GM12878 (cell line): ENCODE measurements at regions of chr12 and their contacts with region 1.

Region 1: GRCh38 chr12:26884765-26885576 is 52.0 kb upstream of the ITPR2 start:
- DNase-seq: peak; percentile 65
- ATAC-seq: peak; percentile 98
- H3K4me3 ChIP-seq: no peak overlapping the region
- H3K27ac ChIP-seq: no peak overlapping the region
- H3K4me1 ChIP-seq: peaks cover 4% of the 10 kb centered on the region; the same call in 1 of the 2 replicates
- H3K27me3 ChIP-seq: no peaks in the 10 kb centered on the region
- CTCF ChIP-seq: peak; percentile 95 to 98 (median 98)
- EP300 ChIP-seq: no peak
- POLR2A ChIP-seq: no peak
- RAD21 ChIP-seq: peak; percentile 96

Region 2: DNA sequence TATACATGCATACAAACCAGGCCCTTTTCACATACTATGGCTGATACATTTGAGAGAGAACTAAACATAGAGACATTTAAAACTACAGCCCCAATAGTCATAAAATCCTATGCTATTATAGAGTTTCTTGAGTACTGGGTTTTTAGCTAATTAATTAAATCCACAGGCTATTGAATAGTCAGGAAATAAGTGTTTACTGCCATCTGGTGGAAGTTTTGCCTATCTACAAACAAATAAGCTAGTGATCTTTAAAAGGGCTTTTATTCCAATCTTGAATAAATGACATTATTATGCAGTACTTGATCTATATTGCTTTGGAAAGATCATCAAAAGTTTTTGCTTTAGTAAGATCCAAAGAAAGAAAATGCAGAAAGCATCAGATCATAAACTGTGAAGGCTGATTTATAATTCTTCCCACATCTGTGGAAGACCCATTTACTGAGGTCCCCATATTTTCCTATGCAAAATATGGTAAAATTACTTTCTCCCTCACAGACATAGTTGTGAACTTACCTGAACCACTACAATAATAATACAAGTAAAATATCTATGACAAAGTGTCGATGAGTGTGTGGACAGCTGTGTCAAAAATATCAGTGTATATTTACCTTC is 183.3 kb before region 1 on chr12:
- CTCF ChIA-PET with region 1: interaction called, 14 read pairs
- POLR2A ChIA-PET with region 1: no interaction called
- RAD21 ChIA-PET with region 1: interaction called, 3 read pairs
- SMC1A ChIA-PET with region 1: interaction called, 7 read pairs
- in situ Hi-C with region 1: no loop called
- intact Hi-C with region 1: no loop called
- DNase-seq: no peak
- ATAC-seq: peak; percentile 78
- H3K4me3 ChIP-seq: no peak overlapping the region
- H3K27ac ChIP-seq: no peak overlapping the region
- H3K4me1 ChIP-seq: no peaks in the 10 kb centered on the region
- H3K27me3 ChIP-seq: no peaks in the 10 kb centered on the region
- CTCF ChIP-seq: peak; percentile 14 to 53 (median 28); a peak in 3 of 6 replicates
- EP300 ChIP-seq: no peak
- POLR2A ChIP-seq: no peak
- RAD21 ChIP-seq: peak; percentile 56

Region 3: DNA sequence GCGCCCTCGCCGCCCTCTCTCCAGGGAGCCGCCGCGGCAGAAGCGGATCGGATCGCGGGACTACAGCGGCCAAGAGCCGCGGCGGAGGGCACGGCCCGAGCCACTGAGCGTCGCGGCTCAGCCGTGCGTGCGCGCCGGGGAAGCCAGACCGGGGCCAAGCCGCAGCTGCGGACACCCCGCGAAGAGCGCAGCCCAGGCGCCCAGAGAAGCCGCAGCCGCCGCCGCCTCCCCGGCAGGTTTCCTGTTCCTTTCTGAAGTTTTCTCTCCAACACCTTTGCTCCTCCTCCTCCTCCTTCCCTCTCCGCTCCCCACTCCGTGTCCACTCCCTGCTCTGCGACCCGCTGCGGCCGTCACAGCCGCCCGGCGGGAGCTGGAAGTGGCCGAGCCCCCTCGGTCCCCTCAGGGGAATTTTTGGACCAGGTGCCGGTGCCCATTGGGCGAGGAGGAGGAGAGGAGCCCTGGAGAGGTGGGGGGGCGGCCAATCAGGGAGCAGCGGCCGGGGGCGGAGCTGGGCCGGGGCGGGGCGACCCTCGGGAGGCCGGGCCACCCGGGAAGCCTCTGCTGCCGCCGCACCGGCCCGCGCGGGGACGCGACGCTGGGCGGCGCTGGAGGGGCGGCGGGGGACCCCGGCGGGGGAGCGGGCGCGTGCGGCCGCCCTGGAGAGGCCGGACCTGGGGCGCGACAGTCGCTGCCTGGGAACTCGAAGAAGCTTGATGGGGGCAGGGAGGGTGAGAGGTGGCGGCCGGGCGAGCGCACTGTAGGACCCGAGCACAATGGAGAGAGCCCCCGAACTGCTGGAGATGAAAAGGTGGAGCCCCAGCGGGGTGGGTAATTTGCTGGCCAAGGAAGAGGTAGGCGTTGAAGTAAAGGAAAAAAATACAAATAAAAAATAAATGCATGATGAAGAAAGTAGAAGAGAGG is 51.9 kb before region 1 on chr12 and contains the start of gene ITPR2:
- CTCF ChIA-PET with region 1: interaction called, 35 read pairs
- POLR2A ChIA-PET with region 1: interaction called, 3 read pairs
- RAD21 ChIA-PET with region 1: interaction called, 27 read pairs
- SMC1A ChIA-PET with region 1: interaction called, 40 read pairs
- in situ Hi-C with region 1: no loop called
- intact Hi-C with region 1: loop called (anchors 10 kb)
- DNase-seq: peak; percentile 60
- ATAC-seq: peak; percentile 84
- H3K4me3 ChIP-seq: peak within 1 kb of the TSS; percentile 87
- H3K27ac ChIP-seq: peak within 1 kb of the TSS; percentile 80
- H3K4me1 ChIP-seq: peaks cover 5% of the 10 kb centered on the region
- H3K27me3 ChIP-seq: no peaks in the 10 kb centered on the region
- CTCF ChIP-seq: peak; percentile 20 to 51 (median 21); a peak in 3 of 6 replicates
- EP300 ChIP-seq: no peak
- POLR2A ChIP-seq: peak; percentile 87
- RAD21 ChIP-seq: peak; percentile 61
- polyA plus RNA-seq, gene ITPR2: 7.5 to 10.9 TPM

Region 4: GRCh38 chr12:26853303-26854030 is 31.5 kb before region 1 on chr12:
- CTCF ChIA-PET with region 1: interaction called, 158 read pairs
- POLR2A ChIA-PET with region 1: interaction called, 6 read pairs
- RAD21 ChIA-PET with region 1: interaction called, 60 read pairs
- SMC1A ChIA-PET with region 1: interaction called, 98 read pairs
- in situ Hi-C with region 1: no loop called
- intact Hi-C with region 1: loop called (anchors 1 kb)
- DNase-seq: no peak
- ATAC-seq: peak; percentile 97
- H3K4me3 ChIP-seq: no peak overlapping the region
- H3K27ac ChIP-seq: no peak overlapping the region
- H3K4me1 ChIP-seq: peaks cover 3% of the 10 kb centered on the region; the same call in 1 of the 2 replicates
- H3K27me3 ChIP-seq: no peaks in the 10 kb centered on the region
- CTCF ChIP-seq: peak; percentile 81 to 94 (median 88); a peak in 5 of 6 replicates
- EP300 ChIP-seq: no peak; a peak in 1 of 4 replicates
- POLR2A ChIP-seq: no peak
- RAD21 ChIP-seq: peak; percentile 93

Region 5: GRCh38 chr12:26870491-26871419 is 14.2 kb before region 1 on chr12:
- CTCF ChIA-PET with region 1: interaction called, 95 read pairs
- POLR2A ChIA-PET with region 1: interaction called, 3 read pairs
- RAD21 ChIA-PET with region 1: interaction called, 36 read pairs
- SMC1A ChIA-PET with region 1: interaction called, 105 read pairs
- in situ Hi-C with region 1: no loop called
- intact Hi-C with region 1: no loop called
- DNase-seq: peak; percentile 35
- ATAC-seq: peak; percentile 33
- H3K4me3 ChIP-seq: no peak overlapping the region
- H3K27ac ChIP-seq: no peak overlapping the region; the same call in 1 of the 2 replicates
- H3K4me1 ChIP-seq: peaks cover 48% of the 10 kb centered on the region
- H3K27me3 ChIP-seq: no peaks in the 10 kb centered on the region
- CTCF ChIP-seq: no peak
- EP300 ChIP-seq: no peak
- POLR2A ChIP-seq: no peak
- RAD21 ChIP-seq: no peak

Region 6: GRCh38 chr12:26937875-26938700 is 53.1 kb after region 1 on chr12 and contains the starts of genes FGFR1OP2 and INTS13:
- CTCF ChIA-PET with region 1: interaction called, 5 read pairs
- POLR2A ChIA-PET with region 1: interaction called, 3 read pairs
- RAD21 ChIA-PET with region 1: interaction called, 10 read pairs
- SMC1A ChIA-PET with region 1: interaction called, 12 read pairs
- in situ Hi-C with region 1: no loop called
- intact Hi-C with region 1: no loop called
- DNase-seq: peak; percentile 95
- ATAC-seq: peak; percentile 87
- H3K4me3 ChIP-seq: peak within 1 kb of the TSS; percentile 99
- H3K27ac ChIP-seq: peak within 1 kb of the TSS; percentile 94
- H3K4me1 ChIP-seq: peaks cover 5% of the 10 kb centered on the region
- H3K27me3 ChIP-seq: no peaks in the 10 kb centered on the region
- CTCF ChIP-seq: no peak
- EP300 ChIP-seq: peak in 1 of 2 experiments; percentile 27; a peak in 1 of 4 replicates
- POLR2A ChIP-seq: peak; percentile 97
- RAD21 ChIP-seq: no peak
- polyA plus RNA-seq, gene FGFR1OP2: 29.0 to 32.2 TPM
- polyA plus RNA-seq, gene INTS13: 43.4 to 65.4 TPM

Region 7: DNA sequence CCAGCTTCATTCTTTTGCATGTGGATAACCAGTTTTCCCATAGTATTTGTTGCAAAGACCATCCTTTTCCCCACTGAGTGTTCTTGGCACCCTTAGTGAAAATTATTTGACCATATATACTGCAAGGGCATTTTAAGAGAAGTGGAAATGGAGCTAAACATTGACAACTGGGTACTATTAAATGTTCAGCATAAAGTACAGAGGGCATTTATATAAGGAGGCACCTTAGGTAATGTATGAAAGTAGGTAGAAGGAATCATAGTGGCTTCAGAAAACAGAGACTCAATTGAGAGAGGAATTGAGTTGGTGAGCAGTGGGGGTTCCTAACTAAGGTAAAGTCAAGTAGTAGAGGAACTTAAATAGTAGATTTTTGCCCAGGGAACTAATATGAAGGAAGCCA is 527.1 kb after region 1 on chr12:
- CTCF ChIA-PET with region 1: no interaction called
- POLR2A ChIA-PET with region 1: no interaction called
- RAD21 ChIA-PET with region 1: no interaction called
- SMC1A ChIA-PET with region 1: no interaction called
- in situ Hi-C with region 1: no loop called
- intact Hi-C with region 1: no loop called
- DNase-seq: no peak
- ATAC-seq: no peak
- H3K4me3 ChIP-seq: no peak overlapping the region
- H3K27ac ChIP-seq: no peak overlapping the region
- H3K4me1 ChIP-seq: no peaks in the 10 kb centered on the region
- H3K27me3 ChIP-seq: no peaks in the 10 kb centered on the region
- CTCF ChIP-seq: no peak
- EP300 ChIP-seq: no peak
- POLR2A ChIP-seq: no peak
- RAD21 ChIP-seq: no peak